ENCODE measurements at regions of chr7 and their contacts with region 1.

Region 1: DNA sequence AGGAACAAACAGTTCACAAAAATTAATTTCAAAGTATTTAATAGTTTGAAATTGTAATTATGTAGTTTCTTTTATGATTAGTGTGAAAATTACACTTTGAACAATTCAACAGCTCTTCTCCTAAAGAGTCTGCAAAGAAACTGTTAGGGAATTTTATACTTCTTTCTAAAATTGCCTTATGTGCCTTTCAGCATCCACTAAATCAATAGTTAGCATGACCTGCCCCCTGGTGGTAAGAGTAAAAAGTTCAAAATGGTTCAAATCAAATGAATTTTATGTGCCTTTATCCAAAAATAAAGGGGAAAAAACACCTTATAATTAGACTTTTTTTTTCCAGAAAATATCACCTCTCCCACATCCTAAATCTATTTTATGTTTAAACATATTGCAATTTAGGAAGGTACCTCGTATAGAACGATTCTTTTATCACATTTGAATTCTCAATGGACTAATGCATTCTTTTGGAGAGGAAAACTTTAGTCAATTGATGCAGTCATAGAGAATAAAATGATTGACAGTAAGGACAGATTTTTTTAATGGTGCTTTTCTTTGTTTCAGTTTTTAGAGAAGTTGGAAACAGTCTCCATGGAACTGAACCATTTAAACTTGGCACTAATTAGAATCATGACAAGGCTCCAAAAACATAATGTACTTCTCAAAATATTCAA is 163.7 kb downstream of the SEMA3D start:
- DNase-seq: peak in 2 of 10 donors; percentile 9 to 23
- H3K4me3 ChIP-seq: no peak overlapping the region
- H3K27ac ChIP-seq: no peak overlapping the region
- H3K27me3 ChIP-seq: no peaks in the 10 kb centered on the region
- CTCF ChIP-seq: peak; percentile 70 to 99 (median 87)

Region 2: GRCh38 chr7:83936056-83936708 is 1087.0 kb before region 1 on chr7:
- intact Hi-C with region 1: loop called in 1 of 2 experiments (anchors 2 kb)
- DNase-seq: peak in 9 of 10 donors; percentile 20 to 77 (median 59)
- H3K4me3 ChIP-seq: no peak overlapping the region
- H3K27ac ChIP-seq: no peak overlapping the region
- H3K27me3 ChIP-seq: no peaks in the 10 kb centered on the region
- CTCF ChIP-seq: peak; percentile 62 to 97 (median 89)

Region 3: GRCh38 chr7:83976295-83976694 is 1046.9 kb before region 1 on chr7:
- intact Hi-C with region 1: loop called (anchors 5 kb)
- DNase-seq: no peak
- H3K4me3 ChIP-seq: no peak overlapping the region
- H3K27ac ChIP-seq: no peak overlapping the region
- H3K27me3 ChIP-seq: no peaks in the 10 kb centered on the region
- CTCF ChIP-seq: peak; percentile 66 to 98 (median 83)

Region 4: DNA sequence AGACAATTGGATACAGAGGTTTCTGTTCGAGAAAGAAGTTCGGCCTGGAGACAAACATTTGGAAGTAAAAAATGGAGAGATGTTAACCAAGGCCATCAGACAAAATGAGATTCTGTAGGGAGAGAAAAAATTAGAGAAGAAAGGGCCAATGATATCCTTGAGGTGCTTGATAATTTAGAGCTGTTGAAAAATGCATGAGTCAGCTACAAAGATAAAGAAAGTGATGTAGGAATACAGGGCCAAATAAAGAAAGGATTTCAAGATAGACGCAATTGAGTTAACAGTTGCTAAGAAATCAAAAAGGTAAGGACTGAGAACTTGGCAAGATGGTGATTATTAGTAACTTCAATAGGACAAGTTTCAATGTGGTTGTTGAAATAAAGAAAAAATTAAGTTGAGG is 444.4 kb before region 1 on chr7:
- intact Hi-C with region 1: no loop called
- DNase-seq: no peak
- H3K4me3 ChIP-seq: no peak overlapping the region
- H3K27ac ChIP-seq: no peak overlapping the region
- H3K27me3 ChIP-seq: no peaks in the 10 kb centered on the region
- CTCF ChIP-seq: no peak

Region 5: GRCh38 chr7:85074016-85074415 is 50.8 kb after region 1 on chr7:
- intact Hi-C with region 1: no loop called
- DNase-seq: no peak
- H3K4me3 ChIP-seq: no peak overlapping the region
- H3K27ac ChIP-seq: no peak overlapping the region
- H3K27me3 ChIP-seq: no peaks in the 10 kb centered on the region
- CTCF ChIP-seq: no peak

Region 6: GRCh38 chr7:85324145-85324799 is 301.1 kb after region 1 on chr7:
- intact Hi-C with region 1: no loop called
- DNase-seq: no peak
- H3K4me3 ChIP-seq: no peak overlapping the region
- H3K27ac ChIP-seq: no peak overlapping the region
- H3K27me3 ChIP-seq: no peaks in the 10 kb centered on the region
- CTCF ChIP-seq: no peak

Region 7: DNA sequence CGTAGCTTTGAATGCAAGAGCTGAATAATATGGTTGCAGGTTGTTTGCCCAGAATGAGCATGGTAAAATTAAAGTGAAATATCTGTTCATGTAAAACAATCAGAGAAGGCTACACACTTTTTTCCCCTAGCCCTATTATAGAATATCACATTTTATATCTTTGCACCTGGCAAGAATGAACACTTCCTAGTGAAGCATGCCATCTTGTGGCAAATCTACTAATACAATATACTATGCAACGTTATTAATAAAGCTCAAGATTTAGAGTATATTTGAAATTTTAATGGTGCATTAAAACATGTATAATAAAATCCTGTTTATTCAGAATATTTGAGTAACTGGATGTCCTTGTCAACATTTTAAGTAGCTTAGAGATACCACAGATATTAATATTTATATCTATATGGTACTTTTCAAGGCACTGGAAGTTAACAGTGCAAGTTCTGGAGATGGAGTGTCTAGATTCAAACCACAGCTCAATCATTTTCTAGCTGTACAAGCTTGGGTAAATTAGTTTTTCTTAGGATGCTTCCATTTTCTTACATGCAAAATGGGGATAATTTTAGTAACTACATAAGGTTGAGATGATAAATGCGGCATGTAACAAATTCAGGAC is 806.7 kb after region 1 on chr7:
- intact Hi-C with region 1: loop called in 1 of 2 experiments (anchors 5 kb)
- DNase-seq: no peak
- H3K4me3 ChIP-seq: no peak overlapping the region
- H3K27ac ChIP-seq: no peak overlapping the region
- H3K27me3 ChIP-seq: no peaks in the 10 kb centered on the region
- CTCF ChIP-seq: peak in 48 of 56 donors; percentile 14 to 71 (median 42)

Measured in dorsolateral prefrontal cortex (tissue), 120 donors.